PC-9 (cell line): ENCODE measurements at regions of chr11 and their contacts with region 1.

Region 1: DNA sequence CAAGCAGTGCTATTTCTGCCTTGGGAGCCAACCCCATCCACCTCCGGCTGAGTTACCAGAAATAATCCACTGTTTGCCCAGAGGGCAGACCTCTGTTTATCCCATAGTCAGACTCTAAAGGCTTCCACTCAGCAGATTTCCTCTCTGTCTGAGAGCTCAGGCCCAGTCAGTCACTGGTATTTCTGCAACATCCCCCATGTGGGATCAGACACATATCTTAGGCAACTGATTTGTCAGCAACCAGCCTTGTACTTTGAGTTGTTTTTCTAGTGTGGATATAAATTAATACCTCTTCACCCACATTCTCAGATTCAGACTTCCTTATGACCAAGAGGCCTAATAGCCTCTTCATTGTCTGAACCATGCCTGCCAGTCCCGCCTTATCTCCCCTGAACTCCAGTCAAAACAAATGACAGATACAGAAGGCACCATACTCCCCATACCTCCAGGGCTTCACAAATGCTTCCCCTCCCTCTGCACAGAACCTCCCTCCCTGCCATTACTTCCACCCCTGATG is 193.6 kb downstream of the FAM76B start:
- DNase-seq: no peak
- H3K4me3 ChIP-seq: no peak overlapping the region
- H3K27ac ChIP-seq: no peak overlapping the region
- H3K4me1 ChIP-seq: no peaks in the 10 kb centered on the region
- H3K27me3 ChIP-seq: no peaks in the 10 kb centered on the region; the same call in 1 of the 2 replicates
- CTCF ChIP-seq: no peak

Region 2: GRCh38 chr11:94376841-94377240 is 1219.2 kb before region 1 on chr11:
- CTCF ChIA-PET with region 1: no interaction called
- POLR2A ChIA-PET with region 1: no interaction called
- intact Hi-C with region 1: loop called (anchors 5 kb)
- DNase-seq: no peak
- H3K4me3 ChIP-seq: no peak overlapping the region
- H3K27ac ChIP-seq: no peak overlapping the region
- H3K4me1 ChIP-seq: no peaks in the 10 kb centered on the region
- H3K27me3 ChIP-seq: peaks cover 50% of the 10 kb centered on the region
- CTCF ChIP-seq: no peak

Region 3: GRCh38 chr11:95652002-95652472 is 56.0 kb after region 1 on chr11:
- CTCF ChIA-PET with region 1: no interaction called
- POLR2A ChIA-PET with region 1: no interaction called
- intact Hi-C with region 1: no loop called
- DNase-seq: no peak
- H3K4me3 ChIP-seq: no peak overlapping the region
- H3K27ac ChIP-seq: no peak overlapping the region
- H3K4me1 ChIP-seq: no peaks in the 10 kb centered on the region
- H3K27me3 ChIP-seq: 0 out of 2 replicates have a peak, but pooled peaks cover 4% of the 10 kb centered on the region
- CTCF ChIP-seq: no peak